ENCODE measurements at regions of chrX and their contacts with region 1.

Region 1: GRCh38 chrX:76454456-76454927 is 27.0 kb downstream of the MAGEE1 start:
- DNase-seq: no peak
- ATAC-seq: no peak

Region 2: GRCh38 chrX:76279000-76279399 is 175.5 kb before region 1 on chrX:
- intact Hi-C with region 1: loop called (anchors 10 kb)
- DNase-seq: no peak
- ATAC-seq: no peak